PC-9 (cell line): ENCODE measurements at regions of chr4 and their contacts with region 1.

Region 1: DNA sequence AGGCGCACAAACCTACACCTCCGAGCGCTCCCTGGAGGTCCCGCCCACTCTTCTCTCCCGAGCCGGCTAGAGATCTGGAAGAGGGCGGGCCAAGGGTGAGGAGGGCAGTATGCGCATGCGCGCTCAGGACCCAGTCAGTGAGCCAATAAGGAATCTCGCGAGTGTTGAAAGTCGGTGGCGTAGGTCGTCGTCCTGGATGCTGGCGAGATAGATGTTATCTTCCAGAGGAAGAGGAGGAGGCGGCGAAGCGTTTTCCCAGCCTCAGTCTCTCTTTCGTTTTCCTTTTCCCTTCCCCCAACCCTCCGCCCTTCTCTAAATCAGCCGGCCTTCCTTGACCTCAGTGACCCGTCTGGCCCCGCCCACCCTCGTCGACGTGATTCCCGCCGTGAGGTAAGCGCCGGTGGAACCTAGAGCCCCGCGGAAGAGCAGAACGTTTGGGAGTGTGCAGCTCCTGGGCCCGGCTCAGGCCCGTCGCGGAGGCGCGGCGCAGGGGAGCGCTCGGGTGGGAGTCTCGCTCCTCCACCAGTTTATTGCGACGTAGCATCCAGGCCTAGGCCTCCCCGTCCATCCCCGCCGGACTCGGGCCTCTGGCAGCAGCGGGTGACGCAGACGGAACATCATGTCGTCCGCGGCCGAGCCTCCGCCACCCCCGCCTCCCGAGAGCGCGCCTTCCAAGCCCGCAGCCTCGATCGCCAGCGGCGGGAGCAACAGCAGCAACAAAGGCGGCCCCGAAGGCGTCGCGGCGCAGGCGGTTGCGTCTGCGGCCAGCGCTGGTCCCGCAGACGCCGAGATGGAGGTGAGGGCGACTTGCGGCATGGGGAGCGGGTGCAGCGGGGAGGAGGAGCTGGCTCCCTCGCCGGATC is at the start of gene SMARCA5:
- DNase-seq: peak; percentile 90 to 96
- H3K4me3 ChIP-seq: peak within 1 kb of the TSS; percentile 93
- H3K27ac ChIP-seq: peak within 1 kb of the TSS; percentile 81
- H3K4me1 ChIP-seq: peaks cover 13% of the 10 kb centered on the region
- H3K27me3 ChIP-seq: no peaks in the 10 kb centered on the region
- CTCF ChIP-seq: no peak
- total RNA-seq, gene SMARCA5: 34.4 and 40.5 TPM in 2 replicates

Region 2: DNA sequence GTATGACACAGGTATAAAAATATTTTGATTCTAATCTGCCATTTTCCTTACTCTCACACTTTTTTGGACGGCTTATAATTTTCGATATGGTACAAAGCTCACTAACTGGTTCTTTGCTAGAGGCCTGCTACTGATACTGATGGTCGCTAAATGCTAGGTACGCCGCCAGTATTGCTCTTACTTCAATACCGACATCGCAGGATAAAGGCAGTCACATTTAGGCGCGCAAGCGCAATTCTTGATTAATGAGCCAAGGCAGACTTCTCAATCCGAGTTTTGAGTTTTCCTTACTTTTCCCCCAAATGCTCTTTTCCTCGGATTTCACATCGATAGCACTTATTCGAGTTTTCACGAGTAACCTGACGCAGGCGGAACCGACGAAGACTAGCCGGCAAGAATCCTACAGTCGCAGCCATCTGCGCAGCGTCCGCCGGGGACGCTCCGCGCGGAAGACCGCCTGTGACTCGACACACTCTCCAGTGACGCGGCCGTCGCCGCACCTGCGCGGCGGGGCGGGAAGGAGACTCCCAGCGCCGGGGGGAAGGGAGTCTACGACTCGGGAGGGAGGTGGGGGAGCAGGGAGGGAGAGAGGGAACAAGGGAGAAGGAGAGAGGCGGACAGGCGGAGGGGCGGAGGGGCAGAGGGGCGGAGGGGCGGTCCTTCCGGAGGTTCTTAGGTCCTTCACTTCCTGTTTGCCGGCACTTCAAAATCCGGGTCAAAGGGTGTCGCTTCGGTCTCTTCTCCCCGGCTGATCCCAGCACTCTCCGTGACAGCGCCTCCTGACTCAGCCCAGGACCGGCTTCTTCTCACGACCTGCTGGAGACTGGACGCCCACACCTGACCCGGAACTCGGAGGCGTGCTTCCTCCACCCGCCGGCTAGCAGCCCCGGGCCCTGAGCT is 329.1 kb before region 1 on chr4 and contains the start of gene USP38:
- CTCF ChIA-PET with region 1: no interaction called
- POLR2A ChIA-PET with region 1: no interaction called
- intact Hi-C with region 1: loop called (anchors 1 kb)
- DNase-seq: peak; percentile 88 to 89
- H3K4me3 ChIP-seq: peak within 1 kb of the TSS; percentile 92
- H3K27ac ChIP-seq: peak within 1 kb of the TSS; percentile 89
- H3K4me1 ChIP-seq: peaks cover 32% of the 10 kb centered on the region
- H3K27me3 ChIP-seq: no peaks in the 10 kb centered on the region
- CTCF ChIP-seq: no peak
- total RNA-seq, gene USP38: 11.9 and 12.3 TPM in 2 replicates

Region 3: DNA sequence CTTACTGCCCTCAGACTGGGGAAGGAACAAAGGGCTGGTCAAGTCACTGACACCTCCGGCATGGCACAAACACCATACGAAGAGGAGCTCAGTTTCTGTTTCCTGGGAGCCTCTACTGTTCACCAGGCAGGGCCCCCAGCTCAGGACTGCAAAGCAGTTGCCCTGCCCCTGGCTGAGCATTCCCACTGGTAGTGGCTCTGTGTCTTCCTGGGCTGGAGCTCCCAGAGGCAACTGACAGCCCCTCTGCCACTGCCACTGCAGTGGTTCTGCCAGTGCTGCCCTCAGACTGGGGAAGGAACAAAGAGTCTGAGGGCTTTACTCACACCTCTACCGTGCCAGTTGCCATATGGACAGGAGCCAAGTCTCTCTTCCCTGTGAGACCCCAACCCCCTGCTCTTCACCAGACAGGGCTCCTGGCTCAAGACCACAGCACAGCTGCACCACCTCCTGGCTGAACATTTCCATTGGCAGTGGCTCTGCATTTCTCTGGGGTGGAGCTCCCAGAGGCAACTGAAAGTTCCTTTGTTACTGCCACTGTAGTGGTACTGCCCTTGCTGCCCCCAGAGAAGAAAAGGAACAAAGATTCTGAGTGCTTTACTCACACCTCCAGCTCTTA is 67.9 kb after region 1 on chr4:
- CTCF ChIA-PET with region 1: no interaction called
- POLR2A ChIA-PET with region 1: no interaction called
- intact Hi-C with region 1: no loop called
- DNase-seq: no peak
- H3K4me3 ChIP-seq: no peak overlapping the region
- H3K27ac ChIP-seq: no peak overlapping the region
- H3K4me1 ChIP-seq: no peaks in the 10 kb centered on the region
- H3K27me3 ChIP-seq: no peaks in the 10 kb centered on the region
- CTCF ChIP-seq: no peak